Activated T-helper 2 cell treated with anti-CD3 and anti-CD28 coated beads, Interferon-gamma antibody, Interleukin-2, Interleukin-4, amounts not matched to agents 10 μg/mL and 5 μg/mL and 100 μg/mL, durations not matched to agents 14 hours and 24 hours and 36 hours (primary cell): ENCODE measurements at regions of chr14 and their contacts with region 1.

Region 1: GRCh38 chr14:93975791-93976476 is 436 bp downstream of the ASB2 start:
- DNase-seq: peak; percentile 38
- H3K4me3 Mint-ChIP-seq: peak overlapping the region; percentile 83
- H3K27ac Mint-ChIP-seq: peak overlapping the region; percentile 100
- H3K4me1 Mint-ChIP-seq: peaks cover 87% of the 10 kb centered on the region
- H3K27me3 Mint-ChIP-seq: no peaks in the 10 kb centered on the region

Region 2: GRCh38 chr14:93939304-93940229 is 36.4 kb before region 1 on chr14:
- intact Hi-C with region 1: loop called (anchors 1 kb)
- DNase-seq: peak; percentile 86
- H3K4me3 Mint-ChIP-seq: peak overlapping the region; percentile 49
- H3K27ac Mint-ChIP-seq: peak overlapping the region; percentile 67
- H3K4me1 Mint-ChIP-seq: peaks cover 18% of the 10 kb centered on the region
- H3K27me3 Mint-ChIP-seq: no peaks in the 10 kb centered on the region

Region 3: DNA sequence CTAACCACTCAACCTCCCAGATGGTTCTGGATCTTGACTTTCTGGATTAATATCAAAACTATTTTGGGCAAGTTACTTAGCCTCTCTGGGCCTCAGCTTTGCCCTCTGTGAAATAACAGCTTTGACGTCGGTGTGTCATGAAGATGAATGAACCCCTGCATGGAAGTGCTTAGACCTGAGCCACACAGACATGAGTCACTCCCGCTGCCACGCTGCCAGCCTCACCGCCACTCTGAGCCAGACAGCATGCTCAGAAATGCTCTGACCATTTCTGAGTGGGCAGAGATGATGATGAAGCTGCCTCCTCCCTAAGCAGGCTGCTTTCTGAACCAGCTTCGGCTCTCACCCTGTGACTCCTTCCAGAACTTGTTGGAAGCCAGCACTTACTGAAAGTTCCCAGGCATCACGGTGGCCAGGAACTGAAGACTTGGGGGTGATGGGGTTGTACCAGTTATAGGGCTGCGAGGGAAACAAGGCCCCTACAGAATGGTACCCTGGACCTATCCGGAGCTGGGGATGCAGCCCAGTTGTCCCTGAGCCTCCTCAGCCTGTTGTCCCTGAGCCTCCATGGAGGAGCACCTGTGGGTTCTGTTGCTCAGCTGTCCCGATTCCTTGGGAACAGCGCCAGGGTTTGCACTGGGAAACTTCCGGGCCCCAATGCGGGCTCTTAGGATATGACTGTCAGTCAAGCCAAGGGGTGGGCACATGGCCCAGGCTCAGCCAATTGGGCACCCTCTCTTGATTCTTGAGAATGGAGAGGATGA is 19.2 kb after region 1 on chr14:
- intact Hi-C with region 1: loop called (anchors 1 kb)
- DNase-seq: no peak
- H3K4me3 Mint-ChIP-seq: no peak overlapping the region
- H3K27ac Mint-ChIP-seq: peak overlapping the region; percentile 51
- H3K4me1 Mint-ChIP-seq: peaks cover 39% of the 10 kb centered on the region
- H3K27me3 Mint-ChIP-seq: no peaks in the 10 kb centered on the region

Region 4: GRCh38 chr14:94021001-94021400 is 45.1 kb after region 1 on chr14:
- intact Hi-C with region 1: loop called (anchors 1 kb)
- DNase-seq: no peak
- H3K4me3 Mint-ChIP-seq: no peak overlapping the region
- H3K27ac Mint-ChIP-seq: peak overlapping the region; percentile 81
- H3K4me1 Mint-ChIP-seq: peaks cover 36% of the 10 kb centered on the region
- H3K27me3 Mint-ChIP-seq: peaks cover 8% of the 10 kb centered on the region

Region 5: DNA sequence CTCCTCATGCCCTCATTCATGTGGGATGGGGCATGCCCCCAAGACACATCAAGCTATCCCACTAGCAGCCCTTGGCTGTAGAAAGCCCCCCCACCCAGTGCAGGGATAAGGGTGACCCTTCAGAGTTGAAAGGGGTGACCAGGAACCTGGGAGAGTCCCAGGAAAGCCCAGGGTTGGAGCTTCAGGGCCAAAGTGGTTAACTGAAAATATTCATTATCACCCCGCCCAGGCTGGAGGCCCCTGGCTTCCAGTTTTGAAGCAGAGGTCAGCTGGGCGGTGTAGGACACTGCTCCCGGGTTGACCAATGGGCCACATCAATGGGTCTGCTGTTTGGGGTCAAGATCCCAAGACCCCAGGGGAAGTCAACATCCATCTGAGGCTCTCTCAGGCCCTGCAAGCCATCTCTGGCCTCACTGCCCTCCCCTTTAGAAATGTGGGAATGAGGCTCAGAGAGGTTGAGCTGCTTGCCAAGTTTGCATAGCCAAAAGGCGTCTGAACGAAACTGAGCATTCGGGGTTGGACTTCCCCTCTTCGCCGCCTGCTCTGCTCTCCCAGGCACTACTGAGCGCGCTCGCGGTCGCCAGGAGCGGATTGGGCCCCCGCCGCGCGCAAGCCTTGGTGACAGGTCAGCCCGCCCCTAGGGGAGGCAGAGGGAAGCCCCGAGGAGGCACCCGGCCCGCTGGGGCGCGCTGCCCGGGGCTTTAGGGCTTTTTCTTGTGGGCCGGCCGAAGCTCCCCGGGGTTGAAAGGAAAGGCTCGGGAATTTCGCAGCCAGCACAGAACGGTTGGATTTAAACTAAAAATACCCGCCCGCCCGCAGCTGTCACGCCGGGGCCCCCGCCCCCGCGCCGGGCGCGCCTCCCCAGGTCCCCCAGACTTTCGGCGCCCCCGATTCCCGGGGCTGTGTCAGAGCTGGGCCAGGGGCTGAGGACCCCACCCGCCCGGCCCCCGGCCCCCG is 1539.9 kb after region 1 on chr14:
- intact Hi-C with region 1: loop called (anchors 5 kb)
- DNase-seq: peak; percentile 81
- H3K4me3 Mint-ChIP-seq: peak overlapping the region; percentile 92
- H3K27ac Mint-ChIP-seq: peak overlapping the region; percentile 89
- H3K4me1 Mint-ChIP-seq: peaks cover 62% of the 10 kb centered on the region
- H3K27me3 Mint-ChIP-seq: no peaks in the 10 kb centered on the region